Motor neuron (in vitro differentiated cells): ENCODE measurements at regions of chr7 and their contacts with region 1.

Region 1: GRCh38 chr7:26200444-26201246 is at the start of gene HNRNPA2B1:
- ATAC-seq: peak; percentile 57 to 75 (median 67)
- H3K4me3 ChIP-seq: peak within 1 kb of the TSS; percentile 76 to 99 (median 86)
- H3K27ac ChIP-seq: peak within 1 kb of the TSS; percentile 98 to 99
- H3K4me1 ChIP-seq: peaks cover 6 to 40% of the 10 kb centered on the region in 2 donors
- total RNA-seq, gene HNRNPA2B1: 173 to 834 (median 276) TPM

Region 2: GRCh38 chr7:25913598-25914224 is 286.9 kb before region 1 on chr7:
- in situ Hi-C with region 1: loop called in 2 of 9 experiments (anchors 25 kb)
- ATAC-seq: no peak
- H3K4me3 ChIP-seq: no peak overlapping the region
- H3K27ac ChIP-seq: no peak overlapping the region
- H3K4me1 ChIP-seq: peaks cover 0 to 17% of the 10 kb centered on the region in 2 donors

Region 3: DNA sequence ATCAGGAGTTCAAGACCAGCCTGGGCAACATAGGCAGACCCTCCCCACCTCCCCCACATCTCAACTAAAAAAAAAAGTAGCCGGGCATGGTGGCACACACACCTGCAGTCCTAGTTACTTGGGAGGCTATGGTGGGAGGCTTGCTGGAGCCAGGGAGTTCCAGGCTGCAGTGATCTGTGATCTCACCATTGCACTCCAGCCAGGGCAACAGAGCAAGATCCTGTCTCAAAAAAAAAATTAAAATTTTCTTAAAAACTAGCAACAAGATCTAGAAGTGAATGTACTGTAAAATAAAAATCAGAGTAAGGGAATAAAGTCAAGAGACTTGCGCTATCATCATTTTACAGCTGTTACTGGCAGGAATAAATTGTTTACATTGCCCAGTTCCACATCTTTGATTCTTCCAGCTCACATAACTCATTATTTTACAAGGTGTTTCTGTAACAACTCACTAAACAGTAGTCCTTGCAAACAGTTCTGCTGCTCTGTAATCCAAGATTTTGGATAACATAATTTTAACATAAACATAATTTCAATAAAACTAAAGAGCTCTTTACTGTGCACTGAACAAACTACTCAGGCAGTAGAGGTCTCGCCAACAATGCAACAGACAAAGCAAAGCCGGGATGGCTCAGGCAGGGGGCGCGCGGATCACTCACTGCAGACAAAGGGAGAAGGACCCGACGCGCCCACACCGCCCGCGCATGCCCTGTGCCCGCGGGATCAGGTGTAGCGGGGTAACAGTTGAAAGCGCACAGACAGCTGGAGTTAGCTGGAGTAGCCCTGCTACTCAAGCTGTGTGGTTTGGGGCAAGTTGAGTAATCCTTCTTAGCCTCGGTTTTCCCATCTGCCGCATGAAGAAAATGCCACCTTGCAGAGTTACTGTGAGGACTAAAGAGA is 122.0 kb before region 1 on chr7:
- in situ Hi-C with region 1: loop called in 1 of 9 experiments (anchors 25 kb)
- ATAC-seq: peak; percentile 78 to 100 (median 99)
- H3K4me3 ChIP-seq: peak overlapping the region in 2 of 5 donors; percentile 9 to 12
- H3K27ac ChIP-seq: no peak overlapping the region
- H3K4me1 ChIP-seq: peaks cover 12% of the 10 kb centered on the region in 2 donors

Region 4: DNA sequence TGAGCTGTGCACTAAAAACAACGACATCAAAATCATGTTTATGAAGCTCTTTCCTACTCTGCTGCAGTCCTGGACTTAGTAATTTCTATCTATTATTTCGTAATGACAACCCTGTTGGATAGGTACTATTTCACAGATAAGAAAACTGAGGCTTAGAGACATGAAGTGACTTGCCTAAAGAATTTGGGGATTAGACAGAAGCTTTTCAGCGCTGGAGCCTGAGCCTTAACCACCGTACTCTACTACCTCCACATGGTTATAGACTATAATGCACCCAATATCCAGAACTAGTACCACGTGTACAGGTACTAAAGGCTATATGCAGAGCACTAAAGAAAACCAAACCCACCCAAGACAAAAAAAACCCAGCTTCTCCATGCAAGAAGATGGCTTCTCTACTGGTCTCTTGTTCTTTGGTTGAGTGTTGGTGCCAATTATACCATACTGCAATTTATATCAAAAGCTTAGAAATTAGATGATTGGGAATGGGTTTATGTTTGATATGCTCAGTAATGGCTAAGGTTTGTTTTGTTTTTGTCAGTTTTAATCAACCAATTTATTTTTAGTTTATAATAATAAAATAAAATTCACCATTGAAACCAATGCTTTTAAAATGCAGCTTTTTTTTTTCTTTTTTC is 84.5 kb after region 1 on chr7:
- in situ Hi-C with region 1: no loop called
- ATAC-seq: peak in 3 of 8 experiments; percentile 54 to 67 (median 65)
- H3K4me3 ChIP-seq: no peak overlapping the region
- H3K27ac ChIP-seq: no peak overlapping the region
- H3K4me1 ChIP-seq: no peaks in the 10 kb centered on the region

Region 5: DNA sequence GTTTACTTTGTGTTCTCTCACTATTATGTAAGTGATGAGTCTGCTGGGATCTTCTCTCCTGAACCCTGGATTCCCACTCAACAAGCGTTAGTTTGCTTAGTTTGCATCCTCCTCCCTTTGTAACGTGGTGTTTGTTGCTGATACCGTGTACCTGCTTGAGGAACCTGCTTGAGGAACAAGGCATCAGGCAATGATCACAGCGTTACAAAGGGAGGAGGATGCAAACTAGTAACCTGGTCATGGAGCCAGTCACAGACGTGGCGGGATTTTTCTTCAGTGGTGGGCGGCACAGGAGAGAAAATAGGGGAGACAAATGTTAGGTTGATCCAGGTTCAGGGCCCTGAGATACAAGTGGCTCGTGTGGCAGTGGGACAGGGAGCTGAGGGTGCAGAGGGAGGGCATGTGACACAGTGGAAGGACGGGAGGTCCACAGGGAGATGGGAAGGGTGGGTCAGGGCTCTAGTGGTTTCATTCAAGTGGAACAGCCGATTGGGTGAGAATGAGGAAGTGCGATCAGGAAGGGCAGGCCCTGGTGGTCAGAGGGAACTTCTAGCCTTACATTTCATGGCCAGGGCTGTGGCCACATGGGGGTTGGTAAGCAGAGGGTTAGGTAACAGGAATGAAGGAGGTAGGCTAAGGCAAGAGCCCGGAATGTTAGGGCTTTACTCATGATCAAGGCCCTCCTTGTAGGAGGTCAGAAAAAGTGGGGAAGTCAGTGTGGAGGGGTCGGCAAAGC is 129.0 kb after region 1 on chr7:
- in situ Hi-C with region 1: loop called in 1 of 9 experiments (anchors 25 kb)
- ATAC-seq: no peak
- H3K4me3 ChIP-seq: no peak overlapping the region
- H3K27ac ChIP-seq: no peak overlapping the region
- H3K4me1 ChIP-seq: no peaks in the 10 kb centered on the region

Region 6: GRCh38 chr7:26376175-26376917 is 175.7 kb after region 1 on chr7:
- in situ Hi-C with region 1: no loop called
- ATAC-seq: peak; percentile 66 to 80 (median 77)
- H3K4me3 ChIP-seq: peak overlapping the region; percentile 45 to 69 (median 56)
- H3K27ac ChIP-seq: peak overlapping the region; percentile 96
- H3K4me1 ChIP-seq: peaks cover 16 to 33% of the 10 kb centered on the region in 2 donors